CD4-positive, alpha-beta T cell (primary cell): ENCODE measurements at regions of chr1 and their contacts with region 1.

Region 1: GRCh38 chr1:199113265-199113869 is 474.5 kb downstream of the PTPRC start:
- DNase-seq: peak; percentile 21 to 78 (median 50)
- ATAC-seq: peak; percentile 48
- H3K4me3 ChIP-seq: no peak overlapping the region
- H3K4me3 Mint-ChIP-seq: no peak overlapping the region
- H3K27ac ChIP-seq: no peak overlapping the region
- H3K27ac Mint-ChIP-seq: no peak overlapping the region
- H3K4me1 ChIP-seq: no peaks in the 10 kb centered on the region
- H3K4me1 Mint-ChIP-seq: peaks cover 4% of the 10 kb centered on the region
- H3K27me3 ChIP-seq: no peaks in the 10 kb centered on the region
- H3K27me3 Mint-ChIP-seq: no peaks in the 10 kb centered on the region
- CTCF ChIP-seq: peak; percentile 55

Region 2: DNA sequence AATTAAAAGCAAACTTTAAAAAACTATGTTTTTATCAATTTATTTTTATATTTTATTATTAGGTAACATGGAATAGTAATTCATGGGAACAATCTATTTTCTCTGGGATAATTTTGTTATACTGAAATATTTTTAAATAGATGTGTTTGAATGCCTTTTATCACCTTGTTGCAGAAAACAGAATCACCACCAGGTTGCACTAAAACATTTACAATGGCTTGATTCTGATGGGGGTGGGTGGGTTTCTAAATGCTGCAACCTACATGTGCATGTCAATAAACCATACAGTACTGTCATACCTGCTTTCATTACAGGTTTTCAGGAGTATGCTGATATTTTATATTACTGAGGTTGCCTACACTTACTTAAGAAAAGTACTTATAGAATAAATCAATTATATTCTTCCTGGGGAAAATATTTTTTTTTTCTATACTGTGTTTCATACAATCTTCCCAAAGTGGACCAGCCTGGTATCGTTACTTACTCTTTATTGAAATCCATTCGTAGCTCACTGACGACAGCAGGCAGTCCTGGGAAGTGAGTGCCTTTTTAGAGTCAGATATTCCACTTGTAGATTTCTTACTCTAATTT is 341.7 kb before region 1 on chr1:
- CTCF ChIA-PET with region 1: no interaction called
- POLR2A ChIA-PET with region 1: no interaction called
- intact Hi-C with region 1: loop called in 1 of 2 experiments (anchors 5 kb)
- DNase-seq: peak in 3 of 14 experiments; percentile 26 to 51 (median 51)
- ATAC-seq: no peak
- H3K4me3 ChIP-seq: no peak overlapping the region
- H3K4me3 Mint-ChIP-seq: no peak overlapping the region
- H3K27ac ChIP-seq: no peak overlapping the region
- H3K27ac Mint-ChIP-seq: no peak overlapping the region
- H3K4me1 ChIP-seq: peaks cover 3% of the 10 kb centered on the region
- H3K4me1 Mint-ChIP-seq: peaks cover 5% of the 10 kb centered on the region
- H3K27me3 ChIP-seq: no peaks in the 10 kb centered on the region
- H3K27me3 Mint-ChIP-seq: no peaks in the 10 kb centered on the region
- CTCF ChIP-seq: peak; percentile 52

Region 3: GRCh38 chr1:198892065-198892464 is 221.3 kb before region 1 on chr1:
- CTCF ChIA-PET with region 1: no interaction called
- POLR2A ChIA-PET with region 1: no interaction called
- intact Hi-C with region 1: loop called in 1 of 2 experiments (anchors 10 kb)
- DNase-seq: no peak
- ATAC-seq: no peak
- H3K4me3 ChIP-seq: no peak overlapping the region
- H3K4me3 Mint-ChIP-seq: no peak overlapping the region
- H3K27ac ChIP-seq: no peak overlapping the region
- H3K27ac Mint-ChIP-seq: no peak overlapping the region
- H3K4me1 ChIP-seq: no peaks in the 10 kb centered on the region
- H3K4me1 Mint-ChIP-seq: peaks cover 5% of the 10 kb centered on the region
- H3K27me3 ChIP-seq: no peaks in the 10 kb centered on the region
- H3K27me3 Mint-ChIP-seq: no peaks in the 10 kb centered on the region
- CTCF ChIP-seq: no peak

Region 4: DNA sequence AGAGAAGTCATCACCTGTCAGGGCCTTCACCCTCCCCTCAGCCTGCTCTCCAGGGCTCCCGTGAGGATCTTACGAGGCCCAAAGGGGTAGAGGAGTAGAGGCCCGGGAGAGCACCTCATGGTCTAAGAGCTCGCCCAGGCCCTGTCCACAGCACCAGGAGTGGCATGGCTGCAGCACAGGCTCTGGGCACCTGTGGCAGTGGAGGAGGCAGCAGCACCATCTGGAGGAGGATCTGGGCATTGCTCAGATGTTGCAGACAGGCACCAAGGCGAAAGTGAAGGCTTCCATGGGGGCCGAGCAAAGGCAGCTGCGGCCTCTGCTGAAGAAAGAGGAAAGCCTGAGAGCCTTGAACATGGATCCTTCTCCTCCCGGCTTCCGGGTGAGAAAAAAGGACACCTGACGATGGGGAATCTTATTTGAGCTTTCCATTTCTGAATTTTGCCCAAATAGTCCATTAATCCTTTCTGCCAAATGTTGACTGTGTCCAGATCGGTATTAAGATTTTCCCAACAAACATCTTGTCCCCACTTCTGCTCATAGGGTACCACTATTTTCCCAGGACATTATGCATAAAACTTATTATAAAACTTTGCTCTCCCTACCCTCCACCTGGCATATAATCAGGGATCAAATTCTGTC is 130.2 kb after region 1 on chr1:
- CTCF ChIA-PET with region 1: interaction called, 3 read pairs
- POLR2A ChIA-PET with region 1: no interaction called
- intact Hi-C with region 1: loop called in 1 of 2 experiments (anchors 1 kb)
- DNase-seq: peak; percentile 37 to 79 (median 53)
- ATAC-seq: peak; percentile 95
- H3K4me3 ChIP-seq: no peak overlapping the region
- H3K4me3 Mint-ChIP-seq: no peak overlapping the region
- H3K27ac ChIP-seq: no peak overlapping the region
- H3K27ac Mint-ChIP-seq: no peak overlapping the region
- H3K4me1 ChIP-seq: peaks cover 4% of the 10 kb centered on the region
- H3K4me1 Mint-ChIP-seq: no peaks in the 10 kb centered on the region
- H3K27me3 ChIP-seq: no peaks in the 10 kb centered on the region
- H3K27me3 Mint-ChIP-seq: no peaks in the 10 kb centered on the region
- CTCF ChIP-seq: peak; percentile 63